ENCODE measurements at regions of chr13 and their contacts with region 1.

Region 1: DNA sequence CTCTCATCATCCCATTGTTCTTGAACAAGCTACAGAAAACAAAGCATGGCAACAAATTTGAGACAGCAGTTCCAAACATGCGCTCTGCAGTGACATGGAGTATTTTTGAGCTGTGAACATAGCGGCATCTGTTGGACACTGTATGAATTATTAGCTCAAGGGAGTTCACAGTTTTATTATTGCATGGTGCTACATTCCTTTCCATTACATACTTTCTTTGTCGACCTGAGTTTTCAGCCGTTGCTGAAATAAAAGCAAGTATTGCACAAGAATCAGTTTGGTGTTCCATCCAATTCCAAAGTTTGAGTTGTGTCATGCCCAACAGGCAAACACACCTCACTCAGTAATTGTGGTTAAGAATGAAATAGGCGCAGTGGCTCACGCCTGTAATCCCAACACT is 30.1 kb upstream of the METTL21C start:
- DNase-seq: peak; percentile 23
- H3K4me3 ChIP-seq: no peak overlapping the region
- CTCF ChIP-seq: peak; percentile 58

Region 2: GRCh38 chr13:102422690-102423089 is 302.2 kb before region 1 on chr13:
- CTCF ChIA-PET with region 1: no interaction called
- POLR2A ChIA-PET with region 1: no interaction called
- DNase-seq: no peak
- H3K4me3 ChIP-seq: no peak overlapping the region
- CTCF ChIP-seq: no peak

Region 3: DNA sequence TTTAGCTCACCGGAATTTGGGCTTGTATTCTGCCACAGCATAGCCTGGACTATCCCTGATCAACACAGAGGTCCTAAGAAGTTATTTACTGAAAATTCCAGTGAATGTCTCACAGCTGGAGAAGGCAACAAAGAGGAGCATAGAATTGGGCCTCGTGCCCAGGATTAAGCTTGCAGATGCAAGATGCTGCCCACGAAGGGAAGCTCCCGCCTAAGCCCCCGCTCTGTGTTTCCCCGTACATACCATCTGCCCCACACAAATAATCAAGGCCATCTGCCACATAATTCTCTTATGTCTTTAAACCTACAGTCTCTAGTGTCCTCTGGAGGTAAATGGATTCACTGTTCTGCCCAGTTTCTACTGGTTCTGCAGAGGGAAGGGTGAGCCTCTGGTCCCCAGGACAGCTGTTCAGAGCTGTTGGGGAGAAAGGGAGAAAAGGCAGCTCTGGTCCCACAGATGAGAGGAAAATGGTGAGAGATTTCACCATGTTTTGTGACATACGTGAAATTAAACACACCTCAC is 135.6 kb before region 1 on chr13:
- CTCF ChIA-PET with region 1: interaction called, 26 read pairs
- POLR2A ChIA-PET with region 1: interaction called, 3 read pairs
- DNase-seq: no peak
- H3K4me3 ChIP-seq: no peak overlapping the region
- CTCF ChIP-seq: no peak

Region 4: DNA sequence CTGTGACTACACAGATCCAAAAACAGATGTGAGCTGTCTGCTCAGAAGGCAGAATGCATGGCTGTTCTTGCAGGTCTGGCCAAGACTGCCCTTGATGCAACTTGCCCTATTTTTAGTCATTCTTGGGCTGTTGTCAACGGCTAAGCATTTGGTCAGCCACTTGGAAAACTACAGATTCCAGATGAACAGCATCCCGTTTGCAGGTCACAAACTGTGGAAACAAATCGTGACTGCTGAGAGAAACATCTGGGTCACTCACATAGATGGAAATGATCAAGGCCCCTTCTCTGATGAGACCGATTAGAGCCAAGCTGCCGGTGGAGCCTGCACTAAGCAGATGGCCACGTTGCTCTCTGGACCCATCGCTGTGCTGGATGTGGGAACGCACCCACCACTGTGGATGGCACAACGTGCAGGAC is 14.7 kb before region 1 on chr13:
- CTCF ChIA-PET with region 1: interaction called, 14 read pairs
- POLR2A ChIA-PET with region 1: interaction called, 3 read pairs
- DNase-seq: no peak
- H3K4me3 ChIP-seq: no peak overlapping the region
- CTCF ChIP-seq: no peak

Region 5: DNA sequence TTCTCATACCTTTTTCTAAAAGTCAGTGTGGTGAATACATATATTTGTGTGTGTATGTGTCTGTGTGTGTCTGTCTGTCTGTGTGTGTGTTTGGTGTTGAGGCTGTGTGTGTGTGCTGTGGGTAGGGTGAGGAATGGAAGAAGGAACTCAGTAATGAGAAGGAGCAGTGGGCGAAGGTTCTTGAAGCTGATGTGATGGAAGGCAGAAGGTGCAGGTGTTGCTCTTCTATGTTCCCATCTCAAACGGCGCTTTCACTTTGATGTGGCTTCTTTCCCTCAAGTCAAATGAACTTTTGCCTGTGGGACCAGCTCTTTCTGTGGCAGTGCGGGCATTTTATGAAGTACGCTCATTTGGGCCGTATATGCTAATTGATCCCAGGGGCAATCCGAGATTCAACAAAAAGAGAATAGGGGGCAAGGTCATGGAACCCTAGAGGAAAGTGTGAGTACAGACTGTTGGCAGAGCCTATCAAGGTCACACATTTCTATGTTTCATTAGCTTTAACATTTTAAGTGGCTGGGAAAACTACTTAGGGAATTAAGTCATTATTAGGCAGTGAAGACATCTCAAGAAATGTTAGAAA is 89.2 kb after region 1 on chr13:
- CTCF ChIA-PET with region 1: no interaction called
- POLR2A ChIA-PET with region 1: no interaction called
- DNase-seq: no peak
- H3K4me3 ChIP-seq: no peak overlapping the region
- CTCF ChIP-seq: no peak

Region 6: DNA sequence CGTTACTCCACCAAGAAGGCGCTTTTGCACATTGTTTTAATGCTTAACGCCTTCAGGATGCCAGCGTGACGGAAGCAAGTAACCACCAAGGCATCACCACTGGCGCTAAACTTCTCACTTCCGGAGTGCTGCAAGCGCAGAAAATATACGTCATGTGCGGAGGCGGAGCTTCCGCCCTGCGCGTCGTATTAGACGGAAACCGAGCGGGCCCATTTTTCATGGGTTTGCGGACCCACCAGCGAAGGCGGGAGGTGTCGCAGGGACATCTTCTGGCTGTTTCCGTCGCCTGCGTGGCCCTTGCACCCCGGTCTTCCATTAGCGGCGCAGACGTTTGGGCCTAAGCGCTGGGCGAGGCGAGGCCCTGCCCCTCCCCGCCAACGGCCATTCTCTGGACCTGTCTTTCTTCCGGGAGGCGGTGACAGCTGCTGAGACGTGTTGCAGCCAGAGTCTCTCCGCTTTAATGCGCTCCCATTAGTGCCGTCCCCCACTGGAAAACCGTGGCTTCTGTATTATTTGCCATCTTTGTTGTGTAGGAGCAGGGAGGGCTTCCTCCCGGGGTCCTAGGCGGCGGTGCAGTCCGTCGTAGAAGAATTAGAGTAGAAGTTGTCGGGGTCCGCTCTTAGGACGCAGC is 120.8 kb after region 1 on chr13 and contains the start of gene ERCC5:
- CTCF ChIA-PET with region 1: interaction called, 12 read pairs
- POLR2A ChIA-PET with region 1: no interaction called
- DNase-seq: peak; percentile 74
- H3K4me3 ChIP-seq: peak within 1 kb of the TSS; percentile 95
- CTCF ChIP-seq: no peak

Region 7: DNA sequence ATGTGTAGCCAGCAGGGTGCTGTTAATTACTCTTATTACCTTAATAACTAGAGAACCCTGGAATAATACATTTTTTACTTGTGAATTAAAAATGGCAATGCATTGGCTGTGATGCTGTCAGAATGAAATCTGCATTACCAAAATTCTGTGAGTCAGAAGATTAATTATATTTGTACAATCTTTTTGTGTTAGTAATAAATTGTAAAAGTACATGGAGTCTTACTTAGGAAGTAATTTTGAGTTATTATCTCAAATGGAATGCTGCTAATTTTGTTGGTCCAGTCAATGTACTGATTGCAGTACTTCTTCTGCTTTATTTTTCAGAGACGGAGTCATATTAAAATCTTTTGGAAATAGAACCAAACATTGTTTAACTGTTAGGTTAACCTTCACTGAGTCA is 493.3 kb after region 1 on chr13:
- CTCF ChIA-PET with region 1: no interaction called
- POLR2A ChIA-PET with region 1: no interaction called
- DNase-seq: no peak
- H3K4me3 ChIP-seq: no peak overlapping the region
- CTCF ChIP-seq: no peak

Measured in AG04449 (cell line).